Left cardiac atrium (tissue), 4 donors: ENCODE measurements at regions of chr19 and their contacts with region 1.

Region 1: GRCh38 chr19:41439441-41440222 is at the start of gene DMAC2:
- DNase-seq: peak; percentile 99
- ATAC-seq: peak; percentile 98
- total RNA-seq, gene DMAC2: 59.0 to 67.6 TPM

Region 2: DNA sequence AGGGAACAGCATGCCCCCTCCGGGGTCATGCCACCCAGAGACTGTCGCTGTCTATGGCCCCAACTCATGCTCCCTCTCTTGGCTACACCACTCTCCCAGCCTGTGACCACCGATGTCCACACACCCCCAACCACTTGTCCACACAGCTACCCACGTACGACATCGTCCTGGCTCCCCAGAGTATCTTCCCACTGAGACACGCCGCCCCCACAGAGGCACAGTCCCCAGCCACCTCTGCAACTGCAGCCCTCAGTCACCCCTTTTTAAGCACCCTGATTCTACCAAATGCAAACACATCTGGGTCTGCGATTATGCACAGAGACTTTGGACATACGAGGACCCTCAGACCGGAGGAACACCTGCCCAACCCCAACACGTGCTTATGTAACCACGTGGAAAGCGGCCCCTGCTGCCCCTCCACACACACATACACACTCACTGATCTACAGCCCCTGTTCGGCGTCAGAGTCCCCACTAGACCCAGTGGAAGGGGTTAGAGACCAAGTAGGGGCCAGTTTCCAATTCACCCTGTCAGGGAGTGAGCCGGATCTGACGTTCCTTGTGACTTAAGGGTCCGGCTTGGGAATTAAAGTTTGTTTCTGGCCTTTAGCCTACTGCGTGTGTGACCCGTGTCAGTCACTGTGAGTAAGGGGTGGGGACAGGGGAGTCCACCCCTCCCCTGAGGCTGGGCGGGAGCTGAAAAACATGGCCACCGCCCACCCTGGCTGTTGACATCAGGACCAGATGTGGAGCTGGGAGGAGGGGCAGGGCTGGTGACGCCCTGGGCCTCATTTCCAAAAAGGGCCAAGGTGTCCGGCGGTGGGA is 232.5 kb before region 1 on chr19:
- intact Hi-C with region 1: loop called in 1 of 2 experiments (anchors 10 kb)
- DNase-seq: peak; percentile 85
- ATAC-seq: peak; percentile 78 to 79

Region 3: GRCh38 chr19:41327576-41328156 is 112.0 kb before region 1 on chr19:
- intact Hi-C with region 1: loop called in 1 of 2 experiments (anchors 10 kb)
- DNase-seq: peak; percentile 82
- ATAC-seq: peak; percentile 42 to 44

Region 4: GRCh38 chr19:41397086-41398049 is 42.3 kb before region 1 on chr19 and contains the starts of genes BCKDHA and EXOSC5:
- intact Hi-C with region 1: loop called in 1 of 2 experiments (anchors 5 kb)
- DNase-seq: peak; percentile 100
- ATAC-seq: peak; percentile 99
- total RNA-seq, gene BCKDHA: 24.0 to 31.4 TPM
- total RNA-seq, gene EXOSC5: 8.1 to 13.4 TPM

Region 5: DNA sequence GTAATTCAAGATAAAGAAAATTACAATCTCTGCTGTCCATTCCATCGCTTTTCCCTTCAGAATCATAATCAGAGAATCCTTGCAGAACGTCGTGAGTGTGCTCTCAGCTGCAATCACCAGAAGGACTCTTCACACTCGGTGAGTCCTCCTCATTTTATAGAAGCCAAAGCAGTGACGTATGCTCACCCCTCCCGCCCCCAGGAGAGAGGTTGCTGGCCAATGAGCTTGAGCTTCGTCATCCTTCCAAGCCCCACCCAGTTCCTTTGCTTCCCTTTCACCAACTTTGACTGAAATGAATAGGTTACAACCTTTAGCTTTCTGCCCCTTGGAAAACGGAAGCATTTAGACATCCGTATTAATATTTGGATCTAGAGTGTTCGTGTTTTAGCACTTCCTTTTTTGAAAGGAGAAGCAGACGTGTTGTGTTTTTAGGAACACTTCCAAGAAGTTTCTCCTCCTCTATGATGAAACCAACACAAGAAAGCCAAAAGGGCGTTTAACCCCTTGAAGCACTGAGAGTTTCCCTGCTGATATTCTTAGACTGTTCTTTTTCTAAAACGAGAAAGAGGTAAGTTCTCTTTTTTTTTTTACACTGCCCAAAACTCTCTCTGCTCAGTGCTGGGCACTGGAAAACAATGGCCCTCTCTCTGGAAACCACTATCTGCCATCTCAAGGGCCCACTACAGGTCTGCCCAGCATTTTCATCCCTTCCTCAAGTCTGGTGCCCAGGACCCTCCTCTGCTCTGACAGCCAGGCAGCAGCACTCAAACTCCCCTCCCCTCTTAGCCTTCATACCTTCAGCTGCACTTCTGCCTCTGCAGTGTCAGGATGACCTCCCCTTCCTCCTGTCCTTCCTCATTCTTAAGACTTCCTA is 92.0 kb after region 1 on chr19:
- intact Hi-C with region 1: loop called in 1 of 2 experiments (anchors 10 kb)
- DNase-seq: peak; percentile 87
- ATAC-seq: peak; percentile 96

Region 6: DNA sequence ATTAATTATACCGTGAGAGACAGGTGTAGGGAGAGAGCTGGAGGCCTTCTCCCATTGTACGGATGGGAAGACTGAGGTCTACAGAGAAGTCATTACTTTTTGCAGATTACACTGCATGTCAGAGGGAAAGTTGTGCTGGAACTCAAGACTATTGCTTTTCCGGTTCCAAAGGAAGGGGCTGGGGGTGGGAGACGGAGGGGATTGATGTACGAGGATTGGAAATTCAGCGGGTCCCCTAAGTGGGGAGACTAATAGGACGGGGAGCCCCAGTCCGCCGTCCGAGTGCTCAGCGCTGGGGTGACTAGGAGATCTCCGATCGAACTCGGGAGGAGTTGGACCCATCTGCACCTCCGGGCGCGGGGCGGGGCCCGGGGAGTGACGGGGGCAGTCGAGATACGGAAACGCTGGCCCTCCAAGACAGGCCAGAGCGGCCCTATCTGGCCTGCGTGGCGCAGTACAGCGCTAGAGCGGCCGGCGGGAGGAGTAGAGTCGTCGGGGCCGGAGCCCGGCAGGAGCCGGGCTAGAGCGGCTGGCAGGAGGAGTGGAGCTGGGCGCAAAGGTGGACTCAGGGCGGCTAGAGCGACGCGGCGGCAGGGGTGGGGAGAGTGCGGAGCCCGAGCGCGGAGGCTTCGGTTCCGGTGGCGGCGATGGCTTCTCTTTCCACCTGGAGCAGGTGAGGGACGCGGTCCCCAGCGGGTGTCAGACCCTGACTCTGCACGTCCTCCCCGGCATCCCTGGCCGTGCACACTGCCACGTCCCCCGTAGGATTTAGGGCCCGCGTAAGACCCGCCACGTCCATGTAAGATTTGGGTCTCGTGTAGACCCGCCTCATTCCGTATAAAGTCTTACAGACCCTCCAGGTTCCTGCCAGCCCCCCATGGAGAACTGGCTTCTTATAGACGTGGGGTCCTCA is 444.4 kb after region 1 on chr19:
- intact Hi-C with region 1: no loop called
- DNase-seq: peak; percentile 95
- ATAC-seq: peak; percentile 96